AG04450 (cell line): ENCODE measurements at regions of chr13 and their contacts with region 1.

Region 1: DNA sequence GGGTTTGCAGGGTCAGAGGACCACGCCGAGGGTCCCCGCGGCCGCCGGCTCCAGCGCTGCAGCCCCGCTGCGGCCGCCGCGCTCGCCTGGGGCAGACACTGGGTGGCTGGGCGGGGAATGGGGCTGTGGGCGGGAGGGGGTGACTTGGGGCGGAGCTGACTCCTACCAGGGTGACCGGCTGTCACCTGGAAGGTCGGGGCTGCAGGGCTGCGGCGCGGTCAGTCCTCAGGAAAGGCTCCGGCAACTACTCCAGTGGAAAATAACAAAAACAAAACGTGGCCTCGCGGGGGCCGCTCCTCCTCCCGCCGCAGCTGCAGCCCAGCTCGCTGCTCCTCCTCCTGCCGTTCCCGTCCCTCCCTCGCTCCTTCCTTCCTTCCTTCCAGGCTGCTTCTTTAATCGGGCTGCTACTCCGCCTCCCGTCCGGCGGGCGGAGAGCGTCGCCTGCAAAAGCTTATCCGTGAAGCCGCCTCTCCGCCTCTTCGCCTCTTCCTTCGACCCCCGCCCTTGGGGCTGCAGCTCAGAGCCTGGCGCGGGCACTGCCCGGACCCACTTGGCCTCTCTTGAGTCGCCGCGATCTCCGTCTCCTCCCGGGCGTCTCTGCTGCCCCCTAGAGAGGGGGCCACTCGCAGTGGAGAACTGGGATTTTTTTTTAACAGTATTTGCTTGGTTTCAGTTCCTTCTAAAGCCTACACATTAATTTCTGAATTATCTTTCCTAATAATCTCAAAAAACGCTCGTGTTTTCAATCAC is at the start of gene TBC1D4:
- DNase-seq: peak; percentile 67
- H3K4me3 ChIP-seq: peak within 1 kb of the TSS; percentile 72
- H3K27ac ChIP-seq: peak within 1 kb of the TSS; percentile 60
- H3K27me3 ChIP-seq: no peaks in the 10 kb centered on the region
- CTCF ChIP-seq: peak; percentile 94
- polyA plus RNA-seq, gene TBC1D4: 8.0 TPM in 2 replicates

Region 2: GRCh38 chr13:74930402-74931165 is 551.7 kb before region 1 on chr13:
- CTCF ChIA-PET with region 1: no interaction called
- POLR2A ChIA-PET with region 1: no interaction called
- DNase-seq: peak; percentile 8
- H3K4me3 ChIP-seq: no peak overlapping the region
- H3K27ac ChIP-seq: no peak overlapping the region
- H3K27me3 ChIP-seq: no peaks in the 10 kb centered on the region
- CTCF ChIP-seq: no peak

Region 3: GRCh38 chr13:75372517-75372916 is 109.7 kb before region 1 on chr13:
- CTCF ChIA-PET with region 1: interaction called, 30 read pairs
- POLR2A ChIA-PET with region 1: no interaction called
- DNase-seq: no peak
- H3K4me3 ChIP-seq: no peak overlapping the region
- H3K27ac ChIP-seq: no peak overlapping the region
- H3K27me3 ChIP-seq: no peaks in the 10 kb centered on the region
- CTCF ChIP-seq: peak; percentile 74

Region 4: DNA sequence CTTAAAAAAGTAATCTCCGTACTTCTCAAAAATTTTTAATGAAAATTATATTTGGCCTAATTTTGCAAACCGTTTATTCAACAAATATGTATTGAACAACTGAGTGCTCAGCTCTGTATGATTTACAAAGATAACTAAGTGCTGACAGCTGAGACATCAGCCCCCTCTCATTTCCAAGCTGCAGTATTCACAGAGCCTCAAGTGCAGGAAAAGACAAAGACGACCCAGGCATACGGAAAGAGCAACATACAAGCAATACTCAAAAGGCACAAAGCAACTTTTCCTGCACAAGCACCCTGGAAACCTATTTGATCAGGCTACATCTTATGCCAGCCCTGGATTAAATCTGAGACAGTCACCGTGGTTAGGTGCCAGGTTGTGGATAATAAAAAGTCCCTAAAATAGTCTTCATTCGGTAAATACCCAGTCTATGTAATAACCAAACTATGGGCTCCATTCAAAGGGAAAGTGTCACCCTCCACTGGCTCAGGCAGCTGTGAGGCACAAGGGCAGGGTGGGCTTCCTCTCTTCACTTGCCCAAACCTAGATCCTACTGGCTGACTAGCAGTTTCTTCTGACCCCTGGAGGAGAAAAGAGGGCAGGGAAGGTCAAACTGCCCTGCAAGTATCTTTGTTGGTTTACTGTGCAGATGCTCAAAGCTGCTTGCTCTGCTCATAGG is 65.8 kb before region 1 on chr13:
- CTCF ChIA-PET with region 1: interaction called, 12 read pairs
- POLR2A ChIA-PET with region 1: no interaction called
- DNase-seq: no peak
- H3K4me3 ChIP-seq: no peak overlapping the region
- H3K27ac ChIP-seq: no peak overlapping the region
- H3K27me3 ChIP-seq: no peaks in the 10 kb centered on the region
- CTCF ChIP-seq: no peak

Region 5: DNA sequence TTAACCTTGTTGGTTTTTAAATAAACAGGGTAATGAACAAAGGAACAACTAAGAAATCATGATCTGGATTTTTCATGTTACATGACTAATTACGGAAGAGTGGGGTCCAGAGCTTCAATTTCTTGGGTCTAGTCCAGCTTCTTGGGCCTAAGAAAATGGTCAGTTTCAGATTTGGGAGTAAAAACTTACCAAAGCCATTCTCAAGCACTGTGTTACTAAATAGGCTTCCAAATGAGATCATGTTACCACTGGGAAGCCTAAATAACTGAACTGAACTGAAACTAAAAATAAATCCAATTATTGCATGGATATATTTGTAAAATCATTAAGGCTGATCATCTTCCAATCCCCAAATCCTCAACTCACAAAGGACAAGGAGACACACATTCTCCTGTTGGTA is 14.1 kb before region 1 on chr13:
- CTCF ChIA-PET with region 1: interaction called, 14 read pairs
- POLR2A ChIA-PET with region 1: no interaction called
- DNase-seq: no peak
- H3K4me3 ChIP-seq: no peak overlapping the region
- H3K27ac ChIP-seq: no peak overlapping the region
- H3K27me3 ChIP-seq: no peaks in the 10 kb centered on the region
- CTCF ChIP-seq: no peak

Region 6: GRCh38 chr13:75505327-75505726 is 23.1 kb after region 1 on chr13:
- CTCF ChIA-PET with region 1: interaction called, 22 read pairs
- POLR2A ChIA-PET with region 1: no interaction called
- DNase-seq: no peak
- H3K4me3 ChIP-seq: no peak overlapping the region
- H3K27ac ChIP-seq: no peak overlapping the region
- H3K27me3 ChIP-seq: no peaks in the 10 kb centered on the region
- CTCF ChIP-seq: no peak